Activated CD4-positive, alpha-beta T cell treated with anti-CD3 and anti-CD28 coated beads for 36 hours (primary cell): ENCODE measurements at regions of chr20 and their contacts with region 1.

Region 1: DNA sequence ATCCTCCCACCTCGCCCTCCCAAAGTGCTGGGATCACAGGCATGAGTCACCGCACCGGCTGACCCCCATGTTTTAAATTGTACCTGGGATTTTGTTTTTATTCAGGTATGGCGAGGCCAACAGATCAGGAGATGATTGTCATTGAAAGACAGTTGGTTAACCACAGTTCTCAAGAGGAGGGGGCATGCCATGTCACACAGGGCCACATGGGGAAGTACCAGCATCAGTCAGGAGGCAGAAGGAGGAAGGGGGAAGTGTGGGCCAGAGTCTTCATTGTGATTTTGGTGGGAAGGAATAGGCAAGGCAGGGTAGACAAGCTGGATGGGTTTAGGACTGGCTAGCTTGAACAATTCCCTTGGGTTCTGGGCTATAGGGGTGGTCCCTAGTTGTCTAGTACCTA is 9.9 kb upstream of the MMP9 start:
- DNase-seq: peak; percentile 59
- ATAC-seq: peak; percentile 85
- H3K4me3 Mint-ChIP-seq: no peak overlapping the region
- H3K27ac Mint-ChIP-seq: peak overlapping the region; percentile 2
- H3K4me1 Mint-ChIP-seq: peaks cover 66% of the 10 kb centered on the region
- H3K27me3 Mint-ChIP-seq: no peaks in the 10 kb centered on the region

Region 2: GRCh38 chr20:45987108-45987780 is 11.5 kb before region 1 on chr20:
- CTCF ChIA-PET with region 1: interaction called, 50 read pairs
- POLR2A ChIA-PET with region 1: no interaction called
- intact Hi-C with region 1: no loop called
- DNase-seq: peak; percentile 90
- ATAC-seq: peak; percentile 96
- H3K4me3 Mint-ChIP-seq: no peak overlapping the region
- H3K27ac Mint-ChIP-seq: no peak overlapping the region
- H3K4me1 Mint-ChIP-seq: no peaks in the 10 kb centered on the region
- H3K27me3 Mint-ChIP-seq: no peaks in the 10 kb centered on the region

Region 3: DNA sequence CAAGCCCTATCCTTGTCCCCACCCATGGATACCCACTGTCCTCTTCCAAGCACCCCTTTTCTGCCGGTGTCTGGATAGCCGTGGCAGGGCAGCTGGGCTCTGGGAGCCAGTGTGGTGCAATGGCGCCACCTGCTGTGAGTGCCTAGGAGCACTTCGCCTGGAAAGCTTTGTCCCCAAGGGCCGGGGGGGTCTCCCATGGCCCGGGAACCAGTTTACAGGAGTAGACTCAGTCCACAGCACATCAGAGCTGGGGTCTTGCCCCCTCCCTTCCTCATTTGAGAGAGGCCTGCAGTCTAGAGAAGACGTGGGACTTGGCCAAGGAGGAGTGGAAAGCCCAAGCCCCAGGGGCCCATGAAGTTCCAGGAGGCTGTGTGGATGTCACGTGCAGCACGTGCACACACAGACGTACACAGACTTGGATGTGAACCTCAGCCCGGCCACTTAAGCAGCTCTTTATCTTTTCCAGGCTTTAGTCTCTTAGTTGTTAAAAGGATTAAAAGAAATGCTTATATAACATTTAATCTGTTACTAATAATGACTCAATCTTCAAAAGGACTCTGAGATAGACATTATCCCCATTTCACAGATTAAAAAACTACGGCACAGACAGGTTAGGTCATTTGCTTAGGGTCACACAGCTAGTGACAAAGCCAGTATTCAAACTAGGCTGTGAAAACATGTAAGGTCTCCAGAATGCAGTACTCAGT is 350.4 kb after region 1 on chr20:
- CTCF ChIA-PET with region 1: no interaction called
- POLR2A ChIA-PET with region 1: no interaction called
- intact Hi-C with region 1: no loop called
- DNase-seq: peak; percentile 75
- ATAC-seq: peak; percentile 60
- H3K4me3 Mint-ChIP-seq: no peak overlapping the region
- H3K27ac Mint-ChIP-seq: no peak overlapping the region
- H3K4me1 Mint-ChIP-seq: peaks cover 16% of the 10 kb centered on the region
- H3K27me3 Mint-ChIP-seq: no peaks in the 10 kb centered on the region